ENCODE measurements at regions of chr5 and their contacts with region 1.

Region 1: DNA sequence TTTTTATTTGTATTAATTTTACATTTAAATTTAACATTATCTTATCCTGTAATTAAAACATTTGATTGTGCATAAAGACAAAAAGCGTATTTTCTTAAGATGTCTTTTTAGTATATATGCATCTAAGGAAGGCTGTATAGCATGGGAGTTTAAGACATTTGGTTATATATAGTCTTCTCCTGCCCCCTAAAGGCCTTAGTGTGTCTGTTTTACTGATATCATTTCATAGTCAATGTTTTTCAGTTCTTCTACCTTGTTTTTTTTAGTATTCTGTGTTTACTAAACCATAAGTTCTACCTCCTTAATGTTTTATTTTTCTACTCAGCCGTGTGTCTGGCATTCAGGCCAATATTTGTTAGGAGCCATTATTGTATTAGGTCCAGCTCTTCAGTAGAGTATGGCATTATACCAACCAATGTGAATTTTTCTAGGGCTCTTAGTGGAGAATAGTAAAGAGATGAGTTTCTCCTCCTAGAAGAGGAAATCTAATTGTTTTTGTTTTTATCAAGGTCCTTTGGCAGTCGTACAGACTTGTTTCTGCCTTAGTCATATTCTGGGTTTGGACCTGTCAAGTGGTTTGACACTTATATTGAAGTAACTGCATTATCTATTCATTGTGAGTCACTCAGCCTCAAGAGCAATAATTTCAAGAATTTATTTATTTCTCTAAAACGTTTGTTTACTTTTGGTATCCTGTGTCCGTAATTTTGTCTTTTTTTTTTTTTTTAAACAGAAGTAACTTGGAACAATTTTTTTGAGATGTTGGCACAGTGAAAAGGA is 74.8 kb downstream of the SLF1 start:
- DNase-seq: no peak
- H3K4me3 ChIP-seq: peak overlapping the region in 39 of 59 donors; percentile 0 to 52 (median 28)
- H3K27ac ChIP-seq: peak overlapping the region in 17 of 59 donors; percentile 12 to 75 (median 35)
- H3K27me3 ChIP-seq: no peaks in the 10 kb centered on the region
- CTCF ChIP-seq: peak in 55 of 56 donors; percentile 30 to 71 (median 51)

Region 2: GRCh38 chr5:93596676-93597461 is 1096.4 kb before region 1 on chr5:
- intact Hi-C with region 1: loop called in 1 of 2 experiments (anchors 10 kb)
- DNase-seq: peak in 1 of 10 donors; percentile 61
- H3K4me3 ChIP-seq: peak overlapping the region in 8 of 59 donors; percentile 4 to 76 (median 20)
- H3K27ac ChIP-seq: peak overlapping the region in 37 of 59 donors; percentile 9 to 95 (median 67)
- H3K27me3 ChIP-seq: peaks cover 0 to 18% (median 0%) of the 10 kb centered on the region in 45 donors
- CTCF ChIP-seq: no peak

Region 3: DNA sequence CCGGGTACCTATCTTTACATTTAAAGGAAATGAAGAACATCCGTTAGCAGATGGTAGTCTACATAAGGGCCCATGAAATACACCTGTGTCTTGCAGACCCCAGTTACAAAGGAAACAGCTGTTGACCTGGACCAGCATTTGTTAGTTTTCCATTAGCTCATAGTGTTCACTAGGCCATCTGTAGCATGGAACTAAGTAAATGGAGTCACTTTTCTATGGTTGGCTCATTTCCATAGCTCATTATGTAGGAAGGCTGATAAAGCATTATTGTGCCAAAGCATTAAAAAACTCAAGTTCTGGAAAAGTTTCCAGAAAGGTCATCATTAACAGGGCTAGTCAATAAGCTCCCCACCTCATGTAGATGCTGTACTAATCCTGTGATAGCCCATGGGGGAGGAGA is 1677.7 kb after region 1 on chr5:
- intact Hi-C with region 1: no loop called
- DNase-seq: no peak
- H3K4me3 ChIP-seq: no peak overlapping the region
- H3K27ac ChIP-seq: no peak overlapping the region
- H3K27me3 ChIP-seq: no peaks in the 10 kb centered on the region
- CTCF ChIP-seq: no peak

Measured in dorsolateral prefrontal cortex (tissue), 120 donors.